T-cell (primary cell): ENCODE measurements at regions of chr13 and their contacts with region 1.

Region 1: DNA sequence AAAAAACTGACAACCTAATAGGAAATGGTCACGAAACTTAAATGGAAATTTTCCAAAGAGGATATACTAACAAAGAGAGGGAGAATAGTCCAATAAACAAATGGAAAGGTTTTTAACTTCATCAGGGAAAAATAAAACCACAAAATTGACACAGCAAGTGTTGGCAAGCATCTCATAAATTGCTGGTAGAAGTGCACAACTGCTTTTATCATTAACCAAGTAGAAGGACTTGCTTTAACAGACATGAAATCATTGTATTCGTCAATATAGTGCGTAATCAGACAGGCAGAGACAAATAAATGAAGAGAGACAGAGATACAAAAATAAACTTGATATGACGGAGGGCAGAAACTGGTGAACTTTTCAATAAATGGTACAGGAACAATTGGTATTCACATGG is 7.4 kb downstream of the TGDS start:
- DNase-seq: no peak
- ATAC-seq: no peak
- H3K4me3 ChIP-seq: no peak overlapping the region
- H3K4me3 Mint-ChIP-seq: no peak overlapping the region
- H3K27ac ChIP-seq: no peak overlapping the region
- H3K27ac Mint-ChIP-seq: no peak overlapping the region
- H3K4me1 ChIP-seq: peaks cover 2 to 3% of the 10 kb centered on the region in 2 experiments
- H3K4me1 Mint-ChIP-seq: peaks cover 37 to 57% (median 42%) of the 10 kb centered on the region in 3 donors
- H3K27me3 ChIP-seq: no peaks in the 10 kb centered on the region
- H3K27me3 Mint-ChIP-seq: no peaks in the 10 kb centered on the region

Region 2: DNA sequence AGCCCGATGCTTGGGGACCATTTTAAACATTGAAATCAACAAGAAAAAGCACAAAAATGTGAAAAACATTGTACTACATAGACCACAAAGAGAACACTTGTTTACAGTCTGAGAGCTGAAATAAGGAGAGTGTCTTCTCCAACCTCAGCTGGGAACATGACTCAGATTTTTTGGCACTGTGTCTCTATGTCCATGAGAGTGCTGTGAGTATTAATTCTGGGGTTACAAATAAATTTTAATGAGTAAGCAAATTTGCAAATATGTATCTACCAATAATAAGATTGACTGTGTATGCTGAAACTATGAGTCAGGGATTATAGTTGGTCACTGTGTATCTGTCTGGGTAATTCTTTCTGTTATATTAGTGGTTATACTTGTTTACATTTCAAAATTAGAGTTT is 283.1 kb before region 1 on chr13:
- CTCF ChIA-PET with region 1: no interaction called
- POLR2A ChIA-PET with region 1: interaction called in 1 of 2 experiments, 12 read pairs
- DNase-seq: no peak
- ATAC-seq: no peak
- H3K4me3 ChIP-seq: no peak overlapping the region
- H3K4me3 Mint-ChIP-seq: no peak overlapping the region
- H3K27ac ChIP-seq: no peak overlapping the region
- H3K27ac Mint-ChIP-seq: no peak overlapping the region
- H3K4me1 ChIP-seq: peaks cover 0 to 2% of the 10 kb centered on the region in 2 experiments
- H3K4me1 Mint-ChIP-seq: peaks cover 0 to 6% (median 2%) of the 10 kb centered on the region in 3 donors
- H3K27me3 ChIP-seq: peaks cover 0 to 5% of the 10 kb centered on the region in 2 experiments
- H3K27me3 Mint-ChIP-seq: peaks cover 0 to 2% of the 10 kb centered on the region in 2 donors